Esophagus squamous epithelium (tissue), 5 donors: ENCODE measurements at regions of chr7 and their contacts with region 1.

Region 1: GRCh38 chr7:105759670-105760550 is 116.5 kb downstream of the ATXN7L1 start:
- DNase-seq: no peak
- H3K4me3 ChIP-seq: no peak overlapping the region
- H3K27ac ChIP-seq: no peak overlapping the region
- H3K4me1 ChIP-seq: peaks cover 0 to 15% (median 13%) of the 10 kb centered on the region in 3 donors
- H3K27me3 ChIP-seq: no peaks in the 10 kb centered on the region
- CTCF ChIP-seq: peak; percentile 32 to 77 (median 62)
- POLR2A ChIP-seq: no peak

Region 2: DNA sequence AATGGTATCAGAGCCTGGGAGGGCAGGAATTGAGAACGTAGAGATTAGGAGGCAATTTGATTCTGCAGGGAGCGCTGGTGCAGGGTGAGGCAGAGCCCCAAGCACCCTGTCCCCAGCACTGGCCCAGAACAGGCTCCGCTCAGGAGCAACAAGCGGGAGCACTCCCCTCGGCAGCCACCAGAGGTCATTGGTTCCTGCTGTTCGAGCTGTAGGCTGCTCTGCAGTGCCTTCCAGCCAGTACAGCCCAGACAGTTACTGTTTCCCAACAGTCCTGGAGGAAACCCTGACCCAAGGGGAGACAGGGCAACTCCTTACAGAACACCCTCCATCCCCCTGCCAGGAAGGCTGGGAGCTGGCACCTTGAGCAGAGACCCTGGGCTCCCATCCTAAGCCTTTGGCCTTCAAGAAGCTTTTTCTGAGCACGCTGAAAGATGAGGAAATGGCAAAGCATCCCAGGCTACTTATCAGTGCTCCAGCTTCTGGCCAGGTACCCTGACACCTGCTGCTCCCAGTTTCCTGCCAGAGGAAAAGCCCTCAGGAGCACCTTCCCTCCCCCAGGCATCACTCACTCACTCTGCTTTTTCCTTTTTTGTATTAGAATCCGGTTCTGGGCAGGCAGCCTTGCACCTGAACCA is 107.4 kb before region 1 on chr7:
- intact Hi-C with region 1: loop called (anchors 10 kb)
- DNase-seq: no peak
- H3K4me3 ChIP-seq: no peak overlapping the region
- H3K27ac ChIP-seq: no peak overlapping the region
- H3K4me1 ChIP-seq: peaks cover 0 to 55% (median 18%) of the 10 kb centered on the region in 3 donors
- H3K27me3 ChIP-seq: no peaks in the 10 kb centered on the region
- CTCF ChIP-seq: peak; percentile 55 to 88 (median 82)
- POLR2A ChIP-seq: no peak

Region 3: DNA sequence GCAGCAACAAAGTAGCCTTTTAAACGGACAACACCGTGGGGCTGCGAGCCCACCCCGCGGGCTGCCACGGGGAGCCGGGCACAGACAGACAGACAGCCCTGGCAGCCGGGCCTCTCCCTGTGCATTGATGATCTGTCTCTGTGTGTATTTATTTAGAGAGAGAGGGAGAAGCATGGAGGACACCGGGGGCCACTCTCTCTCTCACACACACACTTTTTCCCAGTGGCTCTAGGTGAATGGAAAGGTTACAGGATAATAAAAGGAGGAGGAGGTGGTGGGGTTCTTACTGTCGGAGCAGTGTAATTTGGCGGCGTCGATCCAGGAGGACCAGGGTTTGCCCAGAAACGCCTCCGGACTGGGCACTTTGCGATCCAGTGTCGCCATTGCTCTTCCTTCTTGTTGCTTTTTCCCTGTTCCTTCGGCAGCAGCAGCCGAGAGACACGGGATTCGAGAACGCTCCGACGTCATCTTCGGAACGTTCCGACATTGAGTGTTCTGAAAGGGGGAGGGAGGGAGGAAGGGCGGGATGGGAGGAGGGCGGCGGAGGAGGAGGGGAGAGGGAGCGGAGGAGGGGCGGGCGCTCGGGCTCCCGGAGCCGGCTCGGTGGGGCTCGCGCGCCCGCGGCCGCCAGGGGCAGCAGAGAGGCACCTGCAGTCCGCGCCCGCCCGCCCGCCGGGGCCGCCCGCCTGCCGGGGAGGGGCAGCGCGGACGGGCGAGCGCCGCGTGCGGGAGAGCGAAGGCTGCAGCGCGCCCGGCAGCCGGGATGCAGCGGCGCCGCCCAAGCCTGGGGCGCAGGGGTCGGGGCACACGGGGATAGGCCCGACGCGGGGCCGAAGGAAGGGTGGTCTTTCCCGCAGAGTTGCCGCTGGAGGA is 116.4 kb after region 1 on chr7 and contains the start of gene ATXN7L1:
- intact Hi-C with region 1: loop called (anchors 10 kb)
- DNase-seq: peak; percentile 67
- H3K4me3 ChIP-seq: peak within 1 kb of the TSS; percentile 69 to 93 (median 72)
- H3K27ac ChIP-seq: peak within 1 kb of the TSS; percentile 88 to 92 (median 90)
- H3K4me1 ChIP-seq: peaks cover 5 to 41% (median 20%) of the 10 kb centered on the region in 3 donors
- H3K27me3 ChIP-seq: no peaks in the 10 kb centered on the region
- CTCF ChIP-seq: peak; percentile 21 to 86 (median 68)
- POLR2A ChIP-seq: peak in 3 of 4 donors; percentile 25 to 69 (median 25)
- total RNA-seq, gene ATXN7L1: 8.0 to 14.1 (median 10.6) TPM

Region 4: DNA sequence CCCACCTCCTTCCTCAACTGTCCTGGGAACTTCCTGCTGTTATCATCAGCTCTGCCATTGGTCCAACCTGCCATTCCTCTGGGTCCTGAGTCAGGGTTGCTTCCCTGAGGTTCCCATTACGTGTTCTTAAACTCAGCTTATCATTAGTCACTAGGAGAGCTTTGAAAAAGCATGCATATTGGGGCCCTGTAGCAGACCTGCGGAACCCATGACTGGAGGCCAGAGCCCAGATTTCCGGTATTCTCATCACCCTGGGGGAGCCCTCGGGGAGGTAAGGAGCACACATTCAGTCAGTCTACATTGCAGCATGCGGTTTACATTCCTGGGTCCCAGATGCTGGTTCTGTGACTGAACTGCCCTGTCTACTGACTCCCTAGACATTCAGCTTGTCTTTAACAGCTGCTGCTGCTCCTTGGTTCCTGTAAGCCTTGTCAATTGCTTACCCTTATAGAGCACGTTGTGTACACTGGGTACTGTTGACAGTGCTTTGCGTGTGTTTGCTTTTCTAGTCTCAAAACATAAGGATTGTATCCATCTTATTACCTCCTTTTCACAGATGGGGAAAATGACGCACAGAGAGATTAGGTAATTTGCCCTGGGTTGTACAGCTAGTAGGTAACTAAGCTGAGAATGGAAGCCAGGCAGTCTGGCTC is 216.0 kb after region 1 on chr7:
- intact Hi-C with region 1: no loop called
- DNase-seq: no peak
- H3K4me3 ChIP-seq: no peak overlapping the region
- H3K27ac ChIP-seq: no peak overlapping the region
- H3K4me1 ChIP-seq: no peaks in the 10 kb centered on the region
- H3K27me3 ChIP-seq: peaks cover 0 to 4% (median 0%) of the 10 kb centered on the region in 4 donors
- CTCF ChIP-seq: no peak
- POLR2A ChIP-seq: no peak

Region 5: GRCh38 chr7:106009403-106010226 is 249.7 kb after region 1 on chr7:
- intact Hi-C with region 1: loop called (anchors 10 kb)
- DNase-seq: peak; percentile 65
- H3K4me3 ChIP-seq: peak overlapping the region in 1 of 4 donors; percentile 47
- H3K27ac ChIP-seq: peak overlapping the region in 3 of 4 donors; percentile 15 to 61 (median 61)
- H3K4me1 ChIP-seq: peaks cover 12 to 23% (median 15%) of the 10 kb centered on the region in 3 donors
- H3K27me3 ChIP-seq: no peaks in the 10 kb centered on the region
- CTCF ChIP-seq: peak; percentile 92 to 98 (median 96)
- POLR2A ChIP-seq: no peak

Region 6: GRCh38 chr7:106041140-106041717 is 281.3 kb after region 1 on chr7:
- intact Hi-C with region 1: loop called (anchors 5 kb)
- DNase-seq: no peak
- H3K4me3 ChIP-seq: no peak overlapping the region
- H3K27ac ChIP-seq: no peak overlapping the region
- H3K4me1 ChIP-seq: peaks cover 7 to 26% (median 10%) of the 10 kb centered on the region in 3 donors
- H3K27me3 ChIP-seq: no peaks in the 10 kb centered on the region
- CTCF ChIP-seq: peak; percentile 17 to 62 (median 56)
- POLR2A ChIP-seq: no peak

Region 7: GRCh38 chr7:106153891-106154449 is 394.1 kb after region 1 on chr7:
- intact Hi-C with region 1: loop called (anchors 10 kb)
- DNase-seq: no peak
- H3K4me3 ChIP-seq: peak overlapping the region in 1 of 4 donors; percentile 12
- H3K27ac ChIP-seq: peak overlapping the region; percentile 35 to 64 (median 47)
- H3K4me1 ChIP-seq: peaks cover 11 to 26% (median 16%) of the 10 kb centered on the region in 3 donors
- H3K27me3 ChIP-seq: no peaks in the 10 kb centered on the region
- CTCF ChIP-seq: peak; percentile 87 to 98 (median 94)
- POLR2A ChIP-seq: no peak